ENCODE measurements at regions of chr1 and their contacts with region 1.

Region 1: GRCh38 chr1:175373786-175374623 is 181.4 kb upstream of the KIAA0040 start:
- DNase-seq: peak; percentile 10 to 18
- ATAC-seq: peak in 2 of 3 donors; percentile 40 to 58
- H3K4me3 ChIP-seq: no peak overlapping the region
- H3K4me3 Mint-ChIP-seq: no peak overlapping the region
- H3K27ac ChIP-seq: no peak overlapping the region
- H3K27ac Mint-ChIP-seq: no peak overlapping the region
- H3K4me1 ChIP-seq: no peaks in the 10 kb centered on the region
- H3K4me1 Mint-ChIP-seq: no peaks in the 10 kb centered on the region
- H3K27me3 ChIP-seq: no peaks in the 10 kb centered on the region
- H3K27me3 Mint-ChIP-seq: peaks cover 8 to 10% of the 10 kb centered on the region in 2 donors
- CTCF ChIP-seq: peak; percentile 39

Region 2: DNA sequence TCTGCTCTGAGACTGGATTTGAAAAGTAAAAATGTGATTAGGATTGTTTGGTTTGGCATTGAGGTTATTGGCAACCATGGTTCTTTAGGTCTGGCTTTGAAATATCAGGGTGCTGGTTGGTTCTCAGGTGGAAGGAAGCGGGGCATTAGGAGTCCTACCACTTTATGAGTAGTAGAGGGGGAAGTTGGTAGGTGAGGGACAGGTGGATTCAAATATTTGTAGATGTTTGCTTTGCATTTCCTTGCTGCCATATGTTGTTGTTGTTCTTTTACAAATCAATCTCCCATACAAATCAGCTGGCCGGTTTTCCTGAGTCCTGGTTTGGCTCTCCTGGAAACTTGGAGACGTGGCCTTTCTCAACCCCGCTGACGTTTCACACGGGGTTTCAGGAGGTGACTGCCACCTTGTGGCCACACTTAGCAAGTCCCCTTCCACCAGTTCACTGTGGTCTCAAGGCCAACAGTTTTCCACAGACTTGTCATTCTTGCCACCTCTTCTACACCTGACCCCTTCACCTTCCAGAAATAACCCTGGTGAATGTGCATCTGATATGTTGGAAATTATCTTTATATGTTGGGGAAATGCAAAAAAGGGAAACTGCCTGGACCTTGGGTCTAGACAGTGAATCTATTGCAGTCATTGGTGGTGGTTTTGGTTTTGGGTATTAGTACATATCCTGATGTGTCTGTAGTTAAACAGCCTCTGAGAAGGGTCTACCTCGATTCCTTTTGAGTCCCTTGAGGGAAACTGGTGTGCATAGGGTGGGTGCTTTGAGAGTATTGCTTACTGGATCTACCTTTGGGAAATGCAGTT is 54.4 kb before region 1 on chr1:
- intact Hi-C with region 1: no loop called
- DNase-seq: peak; percentile 57 to 88
- ATAC-seq: peak; percentile 84 to 95 (median 93)
- H3K4me3 ChIP-seq: no peak overlapping the region
- H3K4me3 Mint-ChIP-seq: no peak overlapping the region
- H3K27ac ChIP-seq: no peak overlapping the region
- H3K27ac Mint-ChIP-seq: no peak overlapping the region
- H3K4me1 ChIP-seq: no peaks in the 10 kb centered on the region
- H3K4me1 Mint-ChIP-seq: peaks cover 0 to 7% of the 10 kb centered on the region in 2 donors
- H3K27me3 ChIP-seq: no peaks in the 10 kb centered on the region
- H3K27me3 Mint-ChIP-seq: no peaks in the 10 kb centered on the region
- CTCF ChIP-seq: peak; percentile 81

Region 3: DNA sequence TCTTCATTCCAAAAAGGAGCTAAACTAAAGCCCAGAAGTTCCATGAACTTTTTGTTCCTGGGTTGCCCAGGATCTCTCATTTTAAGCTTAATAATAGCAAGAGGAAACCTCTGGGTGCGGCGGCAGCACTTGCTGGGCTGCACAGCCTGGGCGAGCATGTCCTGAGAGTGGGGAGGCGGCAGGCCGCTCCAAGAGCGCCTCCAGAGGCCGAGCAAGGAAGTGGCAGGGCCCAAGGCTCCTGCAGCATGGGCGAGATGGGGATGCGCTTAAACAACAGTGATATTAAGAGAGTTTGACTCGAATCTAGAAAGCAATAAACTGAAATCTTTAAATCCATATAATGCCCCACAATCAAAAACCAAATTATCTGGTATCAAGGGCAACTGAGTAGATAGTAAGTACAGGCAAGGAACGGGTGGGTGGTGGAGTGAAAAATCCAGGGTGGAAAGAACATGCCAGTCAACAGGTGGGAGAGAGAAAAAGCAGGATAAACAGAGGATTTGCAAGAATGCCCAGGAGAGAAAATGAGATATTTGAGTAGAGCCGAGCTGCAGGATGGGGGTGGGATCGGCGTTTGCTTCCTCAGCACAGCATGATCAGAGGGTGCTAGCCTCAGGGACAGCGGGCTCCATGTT is 383.5 kb after region 1 on chr1:
- intact Hi-C with region 1: loop called (anchors 5 kb)
- DNase-seq: peak in 1 of 2 donors; percentile 7
- ATAC-seq: peak in 2 of 3 donors; percentile 57 to 81
- H3K4me3 ChIP-seq: no peak overlapping the region
- H3K4me3 Mint-ChIP-seq: no peak overlapping the region
- H3K27ac ChIP-seq: no peak overlapping the region
- H3K27ac Mint-ChIP-seq: no peak overlapping the region
- H3K4me1 ChIP-seq: no peaks in the 10 kb centered on the region
- H3K4me1 Mint-ChIP-seq: no peaks in the 10 kb centered on the region
- H3K27me3 ChIP-seq: no peaks in the 10 kb centered on the region
- H3K27me3 Mint-ChIP-seq: peaks cover 13 to 26% of the 10 kb centered on the region in 2 donors
- CTCF ChIP-seq: peak; percentile 69

Region 4: GRCh38 chr1:176073524-176074157 is 699.6 kb after region 1 on chr1:
- intact Hi-C with region 1: loop called (anchors 5 kb)
- DNase-seq: peak in 1 of 2 donors; percentile 67
- ATAC-seq: peak; percentile 49 to 67 (median 52)
- H3K4me3 ChIP-seq: no peak overlapping the region
- H3K4me3 Mint-ChIP-seq: no peak overlapping the region
- H3K27ac ChIP-seq: no peak overlapping the region
- H3K27ac Mint-ChIP-seq: no peak overlapping the region
- H3K4me1 ChIP-seq: no peaks in the 10 kb centered on the region
- H3K4me1 Mint-ChIP-seq: peaks cover 24 to 31% of the 10 kb centered on the region in 2 donors
- H3K27me3 ChIP-seq: no peaks in the 10 kb centered on the region
- H3K27me3 Mint-ChIP-seq: no peaks in the 10 kb centered on the region
- CTCF ChIP-seq: peak; percentile 63

Measured in natural killer cell (primary cell).